Activated CD8-positive, alpha-beta memory T cell treated with anti-CD3 and anti-CD28 coated beads, Interleukin-2, amount 10 ng/mL, durations not matched to agents 7 days and 5 days (primary cell): ENCODE measurements at regions of chr9 and their contacts with region 1.

Region 1: DNA sequence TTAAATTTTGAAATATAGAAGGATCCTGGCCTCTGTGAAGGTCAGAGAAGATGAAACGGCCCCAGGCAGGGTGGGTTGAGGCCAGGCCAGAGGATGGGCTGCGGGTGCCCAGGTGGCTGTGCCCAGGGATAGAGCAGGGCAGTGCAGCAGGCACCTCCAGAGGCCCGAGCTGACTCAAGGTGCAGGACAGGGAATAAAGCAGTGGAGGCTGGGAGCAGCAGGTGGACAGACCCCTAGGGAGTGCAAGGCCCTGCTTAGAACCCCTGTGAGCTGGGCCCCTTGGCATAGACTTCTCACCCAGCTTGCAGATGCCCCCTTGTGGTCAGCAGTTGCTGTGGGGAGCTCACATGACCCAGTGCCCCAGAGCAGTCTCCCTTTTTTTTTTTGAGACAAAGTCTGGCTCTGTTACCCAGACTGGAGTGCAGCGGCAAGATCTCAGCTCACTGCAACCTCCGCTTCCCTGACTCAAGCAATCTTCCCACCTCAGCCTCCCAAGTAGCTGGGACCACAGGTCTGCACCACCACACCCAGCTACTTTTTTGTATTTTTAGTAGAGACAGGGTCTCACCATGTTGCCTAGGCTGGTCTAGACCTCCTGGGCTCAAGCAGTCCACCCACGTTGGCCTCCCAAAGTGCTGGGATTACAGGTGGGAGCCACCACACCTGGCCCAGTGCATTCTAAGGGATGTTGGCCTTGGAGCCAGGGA is 118.8 kb downstream of the WNK2 start:
- DNase-seq: peak; percentile 70
- ATAC-seq: peak; percentile 73
- H3K4me3 Mint-ChIP-seq: no peak overlapping the region
- H3K27ac Mint-ChIP-seq: no peak overlapping the region
- H3K4me1 Mint-ChIP-seq: peaks cover 8% of the 10 kb centered on the region
- H3K27me3 Mint-ChIP-seq: no peaks in the 10 kb centered on the region

Region 2: DNA sequence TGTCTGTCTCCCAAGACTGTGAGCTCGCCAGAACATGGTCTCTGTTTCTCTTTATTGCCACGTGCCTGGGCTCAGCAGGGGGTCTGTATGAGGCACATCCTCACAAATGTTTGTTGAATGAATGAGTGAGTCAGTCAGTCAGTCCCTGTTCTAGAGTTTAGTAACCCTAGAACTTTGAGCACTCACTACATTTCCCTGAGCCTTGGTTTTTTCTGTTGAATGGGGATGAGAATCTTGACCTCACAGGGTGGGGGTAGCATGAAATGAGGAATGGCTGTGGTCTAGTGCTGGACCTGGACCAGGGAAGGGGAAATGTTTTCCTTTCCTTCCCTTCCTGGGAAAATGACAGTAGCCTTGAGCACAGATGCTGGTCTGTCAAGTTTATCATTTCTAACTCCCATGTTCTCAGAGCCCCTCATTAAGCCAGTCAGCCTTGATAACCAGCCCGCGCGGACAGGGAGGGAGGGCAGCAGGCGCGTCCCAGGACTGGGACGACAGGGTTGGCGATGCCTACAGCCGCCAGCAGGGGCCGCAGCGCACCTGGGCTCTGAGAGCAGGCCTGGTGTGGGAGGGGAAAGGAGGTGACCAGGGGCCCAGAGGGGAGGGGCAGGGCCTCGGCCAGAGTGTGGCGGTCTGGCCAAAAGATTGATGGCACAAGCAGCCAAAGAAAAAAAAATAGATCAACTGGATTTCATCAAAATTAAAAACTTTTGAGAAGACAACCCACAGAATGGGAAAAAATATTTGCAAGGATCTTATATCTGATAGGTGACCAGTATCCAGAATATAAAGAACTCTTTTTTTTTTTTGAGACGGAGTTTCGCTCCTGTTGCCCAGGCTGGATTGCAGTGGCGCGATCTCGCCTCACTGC is 142.9 kb before region 1 on chr9:
- CTCF ChIA-PET with region 1: interaction called, 12 read pairs
- DNase-seq: peak; percentile 79
- ATAC-seq: peak; percentile 85
- H3K4me3 Mint-ChIP-seq: no peak overlapping the region
- H3K27ac Mint-ChIP-seq: no peak overlapping the region
- H3K4me1 Mint-ChIP-seq: peaks cover 25% of the 10 kb centered on the region
- H3K27me3 Mint-ChIP-seq: no peaks in the 10 kb centered on the region

Region 3: GRCh38 chr9:93319992-93320500 is 17.3 kb after region 1 on chr9:
- CTCF ChIA-PET with region 1: no interaction called
- DNase-seq: peak; percentile 36
- ATAC-seq: no peak
- H3K4me3 Mint-ChIP-seq: no peak overlapping the region
- H3K27ac Mint-ChIP-seq: no peak overlapping the region
- H3K4me1 Mint-ChIP-seq: peaks cover 14% of the 10 kb centered on the region
- H3K27me3 Mint-ChIP-seq: peaks cover 36% of the 10 kb centered on the region